BJ (cell line): ENCODE measurements at regions of chr10 and their contacts with region 1.

Region 1: DNA sequence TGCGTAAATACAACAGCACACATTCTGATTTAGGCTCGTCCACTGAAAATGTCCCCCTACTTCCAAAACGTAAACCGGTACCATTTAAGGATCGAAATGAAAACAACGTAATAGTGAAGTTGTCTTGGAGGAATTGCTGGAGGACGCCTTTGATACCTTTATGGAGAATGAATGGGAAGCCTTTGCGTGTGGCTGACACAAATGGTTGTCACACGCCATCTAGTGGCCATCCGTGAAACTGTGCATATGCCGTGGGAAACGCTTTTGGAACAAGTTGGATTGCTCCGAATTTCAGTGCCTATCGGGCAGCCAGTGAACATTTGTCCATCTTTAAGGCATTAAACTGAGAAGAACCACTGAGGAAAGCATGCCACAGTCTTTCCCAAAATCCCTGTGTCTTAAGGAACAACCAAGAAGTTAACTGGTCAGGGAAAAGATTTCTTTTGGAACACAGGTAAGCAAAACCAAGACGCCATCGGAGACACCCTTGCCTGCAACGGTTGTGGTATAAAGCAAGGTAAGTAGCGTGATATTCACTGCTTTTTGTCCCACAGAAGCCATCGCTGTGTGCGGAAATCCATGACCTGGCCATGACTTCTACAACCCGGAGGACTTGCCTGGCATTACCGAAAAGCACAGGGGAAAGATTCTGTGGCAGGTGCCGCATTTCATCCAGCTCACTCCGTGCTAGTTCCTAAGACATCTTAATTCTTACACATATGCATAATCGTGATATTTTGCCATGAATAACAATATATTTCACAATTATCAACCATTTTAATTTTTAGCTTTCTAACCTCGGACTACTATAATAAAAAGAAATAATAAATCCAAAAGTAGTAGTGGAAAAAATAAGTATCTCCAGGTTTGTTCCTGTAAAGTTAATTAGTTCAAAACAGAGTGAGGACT is 100.6 kb downstream of the FAM204A start:
- DNase-seq: peak; percentile 19
- H3K4me3 ChIP-seq: no peak overlapping the region
- H3K27me3 ChIP-seq: 0 out of 2 replicates have a peak, but pooled peaks cover 2% of the 10 kb centered on the region
- CTCF ChIP-seq: peak; percentile 88

Region 2: DNA sequence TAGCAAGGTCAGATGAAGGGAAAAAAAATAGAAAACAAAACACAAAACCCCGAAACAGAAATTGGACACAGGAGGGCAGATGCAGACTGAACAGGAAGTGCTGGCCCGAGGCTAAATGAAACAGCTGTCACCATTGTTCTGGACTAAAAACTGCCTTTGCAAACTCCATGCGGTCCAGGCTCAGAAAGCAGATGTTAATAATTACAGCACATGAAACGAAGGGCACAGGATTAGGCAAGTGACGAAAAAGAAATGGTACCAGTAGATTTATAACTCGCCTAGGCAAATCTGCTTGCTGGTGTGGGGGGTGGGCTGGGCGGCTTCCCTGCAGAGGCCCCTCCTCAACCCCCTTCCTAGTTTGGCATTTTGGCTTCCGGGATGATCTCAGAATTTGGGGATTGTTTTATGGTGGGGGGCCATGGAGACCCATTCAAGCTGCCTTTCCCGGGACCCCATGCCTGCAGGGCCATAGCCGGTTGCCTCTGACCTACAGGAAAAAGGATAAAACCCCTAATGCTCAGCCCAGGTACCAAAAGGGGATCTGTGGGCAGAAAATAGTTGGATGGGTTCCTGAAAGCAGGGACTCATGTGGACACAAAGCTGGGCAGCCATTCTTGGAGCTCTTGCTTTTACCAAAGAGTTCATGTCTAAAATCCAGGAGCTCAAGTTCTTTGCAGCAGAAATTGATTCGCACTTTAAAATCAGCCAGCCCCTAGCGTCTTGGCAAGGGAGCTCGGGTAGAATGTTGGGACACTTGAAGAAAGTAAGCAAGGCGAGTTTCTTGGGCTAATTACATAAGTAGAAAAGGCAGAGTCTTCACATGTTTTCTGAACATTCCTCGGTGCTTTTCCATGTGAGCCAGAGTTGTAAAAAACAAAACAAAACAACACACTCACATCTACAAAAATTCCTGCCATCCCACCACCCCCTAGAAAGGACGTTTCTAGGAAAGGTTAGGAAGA is 738.0 kb before region 1 on chr10:
- CTCF ChIA-PET with region 1: interaction called, 59 read pairs
- POLR2A ChIA-PET with region 1: no interaction called
- DNase-seq: peak; percentile 10
- H3K4me3 ChIP-seq: no peak overlapping the region
- H3K27me3 ChIP-seq: no peaks in the 10 kb centered on the region; the same call in 1 of the 2 replicates
- CTCF ChIP-seq: no peak

Region 3: DNA sequence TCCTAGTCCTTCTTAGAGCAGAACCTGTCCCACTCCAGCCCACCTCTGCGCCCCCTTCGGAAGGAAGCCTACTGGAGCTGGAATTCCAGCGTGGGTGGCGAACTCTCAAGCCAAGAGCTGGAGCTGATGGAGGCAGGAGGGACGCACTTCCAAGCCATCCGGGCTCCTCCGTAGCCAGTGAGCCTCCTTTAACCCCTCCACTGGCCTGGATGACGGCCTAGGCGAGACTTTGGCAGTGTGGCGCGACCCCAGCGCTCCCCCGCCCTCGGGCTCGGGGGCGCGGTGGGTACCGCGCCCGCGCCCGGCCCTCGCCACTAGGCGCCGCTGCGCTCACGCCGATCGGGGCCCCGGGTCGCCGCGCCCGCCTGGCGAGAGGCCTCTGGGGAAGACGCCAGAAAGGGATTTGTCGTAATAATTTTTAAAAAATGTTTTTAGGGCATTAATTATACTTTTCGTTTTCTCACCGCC is 704.0 kb before region 1 on chr10:
- CTCF ChIA-PET with region 1: interaction called, 45 read pairs
- POLR2A ChIA-PET with region 1: no interaction called
- DNase-seq: no peak
- H3K4me3 ChIP-seq: no peak overlapping the region
- H3K27me3 ChIP-seq: peaks cover 48% of the 10 kb centered on the region
- CTCF ChIP-seq: peak; percentile 26; the same call in 1 of the 2 replicates

Region 4: DNA sequence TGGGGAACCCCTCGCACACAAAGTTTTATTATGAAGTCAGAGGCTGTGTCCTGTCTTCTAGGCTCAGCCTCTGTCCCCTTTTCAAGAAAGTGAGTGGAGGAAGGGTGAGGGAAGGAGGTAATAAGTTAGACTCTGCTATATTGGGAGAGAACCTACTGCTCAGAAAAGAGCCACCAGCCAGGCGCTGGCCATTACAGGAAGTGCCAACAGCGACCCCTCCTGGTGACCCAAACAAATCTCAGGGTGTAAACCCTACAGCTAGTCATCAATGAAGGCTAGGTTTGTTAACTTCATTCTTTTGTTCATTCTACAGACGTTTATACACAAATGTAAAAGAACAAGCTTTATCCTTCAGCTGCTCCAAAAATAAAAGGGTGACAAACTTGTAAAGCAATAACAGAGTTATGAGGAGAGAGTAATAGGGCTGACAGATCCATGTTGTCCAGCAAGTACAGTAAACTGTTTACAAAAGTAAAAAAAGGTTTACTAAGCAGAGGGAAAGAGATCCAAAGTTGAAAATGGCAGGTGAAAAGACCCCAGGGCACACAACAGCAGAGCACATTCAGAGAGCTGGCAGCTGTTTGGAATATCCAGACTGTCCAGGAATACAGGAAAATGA is 17.9 kb after region 1 on chr10:
- CTCF ChIA-PET with region 1: interaction called, 11 read pairs
- POLR2A ChIA-PET with region 1: no interaction called
- DNase-seq: no peak
- H3K4me3 ChIP-seq: no peak overlapping the region
- H3K27me3 ChIP-seq: no peaks in the 10 kb centered on the region
- CTCF ChIP-seq: peak; percentile 64

Region 5: GRCh38 chr10:118373786-118374185 is 132.3 kb after region 1 on chr10:
- CTCF ChIA-PET with region 1: no interaction called
- POLR2A ChIA-PET with region 1: no interaction called
- DNase-seq: peak; percentile 90
- H3K4me3 ChIP-seq: no peak overlapping the region
- H3K27me3 ChIP-seq: no peaks in the 10 kb centered on the region
- CTCF ChIP-seq: no peak

Region 6: DNA sequence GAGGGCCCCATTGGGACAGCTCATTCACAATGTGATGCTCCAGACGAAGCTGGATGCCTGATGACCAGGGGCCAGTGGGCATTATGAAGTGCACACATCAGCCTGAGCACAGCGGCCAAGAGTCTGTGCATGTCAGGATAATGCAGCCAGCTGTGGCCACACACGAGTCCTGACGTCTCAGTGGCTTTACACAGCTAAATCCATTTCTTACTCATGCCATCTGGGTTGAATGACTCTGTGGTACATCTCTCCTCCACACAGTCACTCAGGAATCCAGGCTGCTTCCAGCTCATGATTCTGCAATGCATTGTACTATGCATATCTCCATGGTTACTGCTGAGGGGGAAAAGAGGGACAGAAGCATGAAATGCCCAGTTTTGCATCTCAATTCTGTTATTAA is 230.4 kb after region 1 on chr10:
- CTCF ChIA-PET with region 1: no interaction called
- POLR2A ChIA-PET with region 1: no interaction called
- DNase-seq: no peak
- H3K4me3 ChIP-seq: no peak overlapping the region
- H3K27me3 ChIP-seq: no peaks in the 10 kb centered on the region
- CTCF ChIP-seq: no peak